Mammary epithelial cell (primary cell): ENCODE measurements at regions of chr22 and their contacts with region 1.

Region 1: DNA sequence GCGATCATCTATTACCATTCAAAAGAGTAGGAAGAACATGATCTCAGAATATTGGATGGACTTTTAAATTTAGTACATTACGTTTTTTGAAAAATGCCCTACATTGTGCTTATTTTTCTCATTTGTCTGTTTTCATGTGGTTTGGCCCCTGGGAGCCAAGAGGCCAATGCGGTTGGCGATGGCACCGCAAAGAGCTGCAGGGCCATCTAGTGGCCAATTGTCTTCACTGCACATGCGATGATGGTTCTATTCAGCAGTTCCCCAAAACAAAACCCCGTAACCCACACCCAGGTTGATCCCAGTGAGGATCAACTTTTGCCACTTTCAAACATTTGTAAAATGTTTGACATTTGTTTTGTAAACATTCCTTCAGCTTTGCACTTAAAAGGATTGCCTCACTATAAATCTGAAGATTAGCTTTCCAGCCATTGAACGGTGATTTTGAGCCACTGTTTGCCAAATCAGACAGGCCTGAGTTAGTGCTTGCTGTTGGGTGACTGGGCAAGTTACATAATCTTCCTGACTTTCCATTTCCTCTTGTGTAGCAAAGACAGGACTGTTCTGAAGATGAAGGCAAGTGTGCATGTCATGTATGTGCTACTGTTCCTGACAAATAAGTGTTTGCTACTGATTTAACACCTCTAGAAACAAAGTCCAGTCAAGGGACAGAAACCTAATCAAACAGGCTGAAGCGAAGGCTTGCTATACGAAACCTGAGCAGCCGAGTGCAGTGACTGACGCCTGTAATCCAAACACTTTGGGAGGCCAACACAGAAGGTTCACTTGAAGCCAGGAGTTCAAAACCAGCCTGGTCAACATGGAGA is 29.2 kb upstream of the XBP1 start:
- DNase-seq: peak; percentile 35
- H3K4me3 ChIP-seq: no peak overlapping the region
- H3K27ac ChIP-seq: no peak overlapping the region
- H3K4me1 ChIP-seq: no peaks in the 10 kb centered on the region
- H3K27me3 ChIP-seq: no peaks in the 10 kb centered on the region
- CTCF ChIP-seq: peak; percentile 98

Region 2: DNA sequence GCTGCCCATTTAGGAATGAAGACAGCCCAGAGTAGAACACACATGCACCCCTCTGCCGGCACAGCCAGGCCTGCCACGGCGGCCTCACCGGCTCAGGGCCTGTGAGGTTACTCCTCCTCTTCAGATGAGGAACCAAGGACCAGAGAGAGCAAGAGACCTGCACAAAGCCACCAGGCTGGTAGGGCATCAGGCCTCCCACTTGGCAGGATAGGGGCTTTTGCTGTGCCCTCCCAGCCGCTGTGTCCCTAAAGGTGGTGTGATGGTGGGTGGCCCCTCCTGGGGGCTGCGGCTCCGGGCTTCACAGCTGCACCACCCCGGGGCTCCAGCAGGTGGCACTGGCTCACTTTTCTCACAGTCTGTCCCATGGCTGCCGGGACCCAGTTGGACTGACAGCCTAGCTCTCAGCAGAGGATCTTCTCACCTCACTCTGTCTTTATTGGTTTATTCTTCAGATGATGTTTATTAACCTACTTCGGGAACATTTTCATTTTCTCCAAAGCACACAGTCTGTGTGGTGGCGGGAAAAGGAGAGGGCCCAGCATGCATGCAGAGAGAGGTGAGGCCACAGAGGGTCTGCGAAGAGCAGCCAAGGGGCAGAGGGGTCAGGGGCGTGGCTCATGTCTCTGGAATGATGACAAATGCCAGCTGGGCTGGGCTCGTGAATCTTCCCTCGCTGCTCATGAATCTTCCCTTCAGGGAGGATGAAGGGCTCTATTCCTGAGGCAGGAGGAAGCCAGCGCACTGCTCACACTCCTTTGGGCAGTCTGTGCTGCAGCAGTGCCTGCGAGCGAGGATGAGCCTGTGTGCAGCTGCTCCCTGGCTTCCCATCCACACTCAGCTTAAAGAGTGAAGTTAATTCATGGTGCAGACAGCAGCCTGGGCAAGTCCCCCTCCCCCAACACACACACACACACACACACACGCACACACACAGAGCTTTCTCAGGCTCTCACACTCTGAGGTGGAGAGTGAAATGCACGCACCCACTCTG is 809.4 kb before region 1 on chr22:
- CTCF ChIA-PET with region 1: no interaction called
- dilution Hi-C with region 1: no loop called
- in situ Hi-C with region 1: no loop called
- intact Hi-C with region 1: loop called (anchors 2 kb)
- DNase-seq: peak; percentile 23
- H3K4me3 ChIP-seq: no peak overlapping the region
- H3K27ac ChIP-seq: no peak overlapping the region
- H3K4me1 ChIP-seq: peaks cover 4% of the 10 kb centered on the region
- H3K27me3 ChIP-seq: no peaks in the 10 kb centered on the region
- CTCF ChIP-seq: peak; percentile 85 to 95

Region 3: GRCh38 chr22:28600546-28601143 is 228.9 kb before region 1 on chr22:
- CTCF ChIA-PET with region 1: no interaction called
- dilution Hi-C with region 1: no loop called
- in situ Hi-C with region 1: loop called (anchors 5 kb)
- intact Hi-C with region 1: loop called (anchors 1 kb)
- DNase-seq: peak; percentile 24
- H3K4me3 ChIP-seq: no peak overlapping the region
- H3K27ac ChIP-seq: no peak overlapping the region
- H3K4me1 ChIP-seq: no peaks in the 10 kb centered on the region
- H3K27me3 ChIP-seq: no peaks in the 10 kb centered on the region
- CTCF ChIP-seq: peak; percentile 34 to 46

Region 4: DNA sequence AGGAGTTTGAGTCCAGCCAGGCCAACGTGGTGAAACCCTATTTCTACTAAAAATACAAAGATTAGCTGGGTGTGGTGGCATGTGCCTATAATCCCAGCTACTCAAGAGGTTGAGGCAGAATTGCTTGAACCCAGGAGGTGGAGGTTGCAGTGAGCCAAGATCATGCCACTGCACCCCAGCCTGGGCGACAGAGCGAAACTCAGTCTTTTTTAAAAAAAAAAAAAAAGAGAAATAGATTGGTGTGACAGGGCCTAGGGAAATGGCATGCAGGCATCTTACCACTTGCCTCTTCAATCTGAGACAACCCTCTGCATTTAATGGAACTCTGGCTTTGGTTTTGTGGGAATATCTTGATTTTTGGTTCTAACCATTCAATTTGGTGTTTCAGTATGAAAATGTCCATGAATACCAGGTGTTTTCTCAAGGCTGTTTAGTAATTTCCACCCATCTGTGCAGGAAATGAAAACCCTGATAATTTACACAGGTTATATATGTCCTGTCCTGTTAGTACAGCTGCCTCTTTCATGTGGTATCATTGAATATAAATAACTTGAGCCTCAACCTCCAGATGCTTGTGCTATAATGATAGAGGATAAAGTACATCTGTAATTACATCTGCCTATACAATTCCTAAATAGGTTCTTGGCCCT is 37.6 kb before region 1 on chr22:
- CTCF ChIA-PET with region 1: no interaction called
- dilution Hi-C with region 1: no loop called
- in situ Hi-C with region 1: no loop called
- intact Hi-C with region 1: loop called (anchors 1 kb)
- DNase-seq: no peak
- H3K4me3 ChIP-seq: no peak overlapping the region
- H3K27ac ChIP-seq: no peak overlapping the region
- H3K4me1 ChIP-seq: no peaks in the 10 kb centered on the region
- H3K27me3 ChIP-seq: no peaks in the 10 kb centered on the region
- CTCF ChIP-seq: no peak

Region 5: DNA sequence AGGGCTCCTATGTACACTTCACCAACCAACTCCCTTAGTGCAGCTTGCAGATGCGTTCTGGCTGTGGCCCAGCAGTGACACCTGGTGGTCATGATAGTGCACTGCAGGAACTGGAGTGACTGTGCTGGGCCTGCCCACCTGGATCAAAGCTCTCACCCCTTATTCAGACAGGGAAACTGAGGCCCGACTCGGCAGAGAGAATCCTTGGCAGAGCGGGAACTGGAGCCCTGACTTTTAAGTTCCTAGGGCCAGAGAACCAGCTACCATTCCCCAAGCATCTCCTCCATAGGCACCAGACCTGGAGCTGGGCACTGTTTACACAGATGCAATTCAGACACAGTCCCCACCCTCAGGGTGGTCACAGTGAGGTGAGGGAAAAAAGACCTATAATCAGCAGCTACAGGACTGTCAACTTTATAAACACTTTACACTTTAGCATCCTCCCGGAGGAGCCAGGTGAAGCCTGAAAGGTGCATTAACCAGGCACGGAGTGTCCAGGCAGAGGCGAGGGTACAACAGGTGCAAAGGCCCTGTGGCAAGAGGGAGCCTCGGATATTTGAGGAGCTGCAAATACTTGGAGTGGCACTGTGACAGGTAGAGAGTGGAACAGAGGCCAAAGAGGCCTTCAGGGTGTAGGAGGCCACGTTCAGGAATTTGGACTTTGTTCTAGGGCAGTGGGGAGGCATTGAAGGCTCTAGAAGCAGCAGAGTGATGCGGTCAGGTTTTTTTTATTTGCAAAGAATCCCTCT is 416.2 kb after region 1 on chr22:
- CTCF ChIA-PET with region 1: no interaction called
- dilution Hi-C with region 1: no loop called
- in situ Hi-C with region 1: no loop called
- intact Hi-C with region 1: loop called (anchors 1 kb)
- DNase-seq: peak; percentile 34
- H3K4me3 ChIP-seq: no peak overlapping the region
- H3K27ac ChIP-seq: no peak overlapping the region
- H3K4me1 ChIP-seq: no peaks in the 10 kb centered on the region
- H3K27me3 ChIP-seq: peaks cover 3% of the 10 kb centered on the region
- CTCF ChIP-seq: peak; percentile 96 to 98